ENCODE measurements at regions of chr18 and their contacts with region 1.

Region 1: GRCh38 chr18:46265196-46266156 is 161.3 kb downstream of the HAUS1 start:
- DNase-seq: no peak

Region 2: GRCh38 chr18:46215902-46216723 is 49.4 kb before region 1 on chr18:
- intact Hi-C with region 1: loop called in 1 of 2 experiments (anchors 2 kb)
- DNase-seq: no peak